ENCODE measurements at regions of chr15 and their contacts with region 1.

Region 1: DNA sequence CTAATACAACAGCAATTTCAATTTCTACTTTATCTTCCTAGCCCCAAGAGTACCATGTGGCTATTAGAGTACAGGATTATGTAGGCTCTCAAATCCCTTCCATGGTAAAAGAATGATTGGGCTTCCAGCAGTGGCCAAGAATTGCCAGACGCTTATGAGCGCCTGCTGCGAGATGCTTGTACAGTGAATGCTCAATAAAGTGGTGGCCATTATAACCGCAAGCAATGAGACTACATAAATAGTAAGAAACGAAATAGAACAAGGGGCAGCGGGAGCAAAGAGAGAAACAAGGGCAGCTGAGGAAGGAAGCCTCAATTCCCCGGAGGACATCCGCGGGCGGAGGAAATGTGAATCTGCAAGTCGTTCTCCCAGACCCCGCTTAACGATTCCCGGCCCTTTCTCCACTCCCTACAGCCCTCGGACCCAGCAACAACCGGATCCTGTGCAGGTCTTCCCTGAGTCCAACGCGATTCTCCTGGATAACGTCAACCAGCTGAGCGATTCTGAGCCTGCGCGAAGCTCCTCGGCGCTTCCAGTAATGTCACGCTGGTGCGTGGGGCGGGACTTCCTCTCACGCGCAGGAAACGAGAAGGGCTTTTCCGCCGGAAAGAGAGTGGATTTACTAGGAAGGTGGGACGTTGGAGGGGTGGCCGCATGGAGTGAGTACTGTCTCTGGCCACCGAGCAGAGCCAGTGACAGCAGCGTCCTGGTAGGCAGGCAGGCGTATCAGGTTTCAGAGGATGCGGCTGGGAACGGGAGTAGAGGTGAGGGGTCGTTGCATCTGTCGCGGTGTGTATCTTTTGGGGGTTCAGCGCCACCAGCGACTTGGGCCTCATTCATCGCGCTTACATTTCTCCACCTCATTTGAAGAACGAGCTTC is 40.5 kb upstream of the AP3B2 start:
- DNase-seq: peak; percentile 97

Region 2: GRCh38 chr15:82540055-82540983 is 209.9 kb before region 1 on chr15 and contains the start of gene RPS17:
- CTCF ChIA-PET with region 1: interaction called, 3 read pairs
- POLR2A ChIA-PET with region 1: interaction called, 38 read pairs
- DNase-seq: peak; percentile 100

Region 3: DNA sequence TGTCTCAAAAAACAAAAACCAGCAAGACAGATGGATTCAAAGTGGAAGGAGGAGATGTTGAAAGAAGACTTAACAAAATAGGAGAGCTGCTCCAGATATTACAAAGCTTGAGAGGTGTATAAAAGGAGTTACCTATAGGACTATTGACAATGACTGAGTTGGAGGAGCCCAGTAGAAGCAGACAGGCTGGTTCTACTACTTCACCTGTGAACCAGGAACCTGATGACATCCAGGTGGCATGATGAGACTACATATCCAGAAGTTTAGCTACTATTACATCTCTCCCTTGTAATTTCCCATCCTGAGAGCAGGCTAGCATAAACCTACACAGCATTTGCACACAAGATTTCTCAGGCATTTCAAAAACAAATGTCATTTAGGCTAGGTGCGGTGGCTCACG is 152.4 kb before region 1 on chr15:
- CTCF ChIA-PET with region 1: no interaction called
- POLR2A ChIA-PET with region 1: no interaction called
- DNase-seq: no peak

Region 4: DNA sequence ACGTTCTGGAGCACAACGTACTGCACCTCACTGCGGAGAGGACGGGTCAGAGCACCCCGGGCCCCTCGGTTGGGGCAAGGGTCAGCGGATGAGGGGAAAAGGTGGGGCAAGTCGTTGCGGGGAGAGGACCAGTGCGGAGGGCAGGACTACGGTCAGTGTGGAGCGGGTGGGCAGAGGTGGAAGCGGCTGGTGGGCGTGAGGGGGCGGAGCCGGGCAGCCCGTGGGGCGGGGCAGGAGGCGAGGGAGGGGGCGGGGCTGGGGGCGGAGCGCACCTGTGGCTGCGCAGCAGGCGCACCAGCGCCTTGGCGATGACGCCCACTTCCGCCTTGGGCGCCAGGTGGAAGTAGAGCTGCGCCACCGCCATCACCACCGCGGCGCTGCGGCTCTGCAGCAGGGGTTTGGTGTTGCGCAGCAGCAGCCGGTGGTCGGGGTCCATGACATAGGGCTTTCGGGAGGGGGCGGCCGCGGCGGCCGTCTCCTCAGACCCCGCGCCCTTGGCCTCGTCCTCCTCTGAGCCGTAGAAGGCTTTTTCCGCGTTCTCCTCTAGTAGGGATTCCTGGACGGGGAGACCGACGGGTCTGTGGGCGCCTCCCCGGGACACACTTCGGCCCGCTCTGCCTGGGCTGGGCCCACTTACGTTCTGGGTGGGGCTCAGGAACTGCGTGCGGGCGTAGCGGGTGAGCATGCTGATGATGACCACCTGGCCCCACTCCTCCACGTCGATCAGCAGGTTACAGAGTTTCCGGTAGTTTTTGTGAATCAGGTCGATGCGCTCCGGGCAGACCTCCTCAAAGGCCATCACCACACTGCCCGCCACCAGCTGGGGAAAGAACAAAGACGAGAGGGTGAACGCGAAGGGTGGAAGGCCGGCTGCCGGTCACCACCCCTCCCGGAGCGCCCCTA is 69.7 kb before region 1 on chr15:
- CTCF ChIA-PET with region 1: no interaction called
- POLR2A ChIA-PET with region 1: interaction called, 19 read pairs
- DNase-seq: peak; percentile 58

Region 5: DNA sequence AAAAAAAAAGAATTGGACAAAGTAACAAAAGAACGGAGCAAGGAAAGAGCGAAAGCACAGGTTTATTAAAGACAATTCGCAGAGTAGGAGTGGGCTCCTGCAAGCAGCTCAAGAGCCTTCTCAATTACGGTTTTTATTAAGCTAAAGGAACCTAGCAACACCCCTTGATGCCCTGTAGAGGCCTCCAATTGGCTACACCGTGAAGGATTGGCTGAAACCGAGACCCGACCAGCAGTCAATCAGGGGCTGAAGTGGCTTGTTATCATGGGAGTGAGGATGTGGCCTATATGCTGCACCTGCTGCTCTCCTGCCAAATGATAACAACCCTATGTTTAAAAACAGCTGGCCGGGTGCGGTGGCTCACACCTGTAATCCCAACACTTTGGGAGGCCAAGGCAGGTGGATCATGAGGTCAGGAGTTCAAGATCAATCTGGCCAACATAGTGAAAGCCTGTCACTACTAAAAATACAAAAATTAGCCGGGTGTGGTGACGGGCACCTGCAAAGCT is 20.1 kb before region 1 on chr15:
- CTCF ChIA-PET with region 1: no interaction called
- POLR2A ChIA-PET with region 1: interaction called, 12 read pairs
- DNase-seq: no peak

Region 6: DNA sequence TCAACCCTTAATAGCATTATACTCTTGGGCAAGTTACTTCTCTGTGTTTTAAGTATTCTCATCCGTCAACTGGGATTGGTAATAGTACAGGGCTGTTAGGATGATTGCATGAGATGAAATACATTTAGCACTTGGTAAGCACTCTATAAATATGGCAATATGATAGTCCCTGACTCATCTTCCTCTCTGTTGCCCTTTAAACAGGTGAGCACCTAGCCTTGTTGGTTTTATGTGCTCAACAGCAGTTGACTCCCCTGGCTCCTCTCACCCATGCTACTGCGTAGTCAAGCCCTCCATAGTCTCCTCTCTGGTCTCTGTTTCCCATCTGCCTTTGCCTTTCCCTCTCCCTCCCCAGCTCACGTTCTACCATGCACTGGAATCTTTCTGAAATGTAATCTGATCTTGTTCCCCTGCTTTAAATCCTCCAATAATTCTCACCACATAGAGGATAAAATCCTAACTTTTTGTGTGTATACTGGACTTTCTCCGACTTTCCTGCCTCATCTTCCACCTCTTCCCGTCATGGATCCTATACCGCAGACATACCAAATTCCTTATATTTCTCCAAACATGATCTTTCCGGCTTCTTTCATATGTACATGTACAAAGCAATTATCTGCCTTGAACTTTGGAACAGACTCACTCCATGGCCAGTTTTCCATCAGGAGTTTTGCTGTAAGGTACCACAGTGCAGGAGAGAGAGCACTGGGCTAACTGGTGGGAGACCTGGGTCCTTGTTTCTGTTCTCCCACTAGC is 13.3 kb after region 1 on chr15:
- CTCF ChIA-PET with region 1: no interaction called
- POLR2A ChIA-PET with region 1: interaction called, 58 read pairs
- DNase-seq: no peak

Region 7: GRCh38 chr15:82774496-82774895 is 24.3 kb after region 1 on chr15:
- CTCF ChIA-PET with region 1: no interaction called
- POLR2A ChIA-PET with region 1: interaction called, 22 read pairs
- DNase-seq: no peak

Region 8: GRCh38 chr15:82803793-82804574 is 53.8 kb after region 1 on chr15:
- CTCF ChIA-PET with region 1: interaction called, 3 read pairs
- POLR2A ChIA-PET with region 1: interaction called, 43 read pairs
- DNase-seq: no peak

Region 9: GRCh38 chr15:82894971-82895520 is 144.9 kb after region 1 on chr15:
- CTCF ChIA-PET with region 1: no interaction called
- POLR2A ChIA-PET with region 1: no interaction called
- DNase-seq: no peak

Region 10: DNA sequence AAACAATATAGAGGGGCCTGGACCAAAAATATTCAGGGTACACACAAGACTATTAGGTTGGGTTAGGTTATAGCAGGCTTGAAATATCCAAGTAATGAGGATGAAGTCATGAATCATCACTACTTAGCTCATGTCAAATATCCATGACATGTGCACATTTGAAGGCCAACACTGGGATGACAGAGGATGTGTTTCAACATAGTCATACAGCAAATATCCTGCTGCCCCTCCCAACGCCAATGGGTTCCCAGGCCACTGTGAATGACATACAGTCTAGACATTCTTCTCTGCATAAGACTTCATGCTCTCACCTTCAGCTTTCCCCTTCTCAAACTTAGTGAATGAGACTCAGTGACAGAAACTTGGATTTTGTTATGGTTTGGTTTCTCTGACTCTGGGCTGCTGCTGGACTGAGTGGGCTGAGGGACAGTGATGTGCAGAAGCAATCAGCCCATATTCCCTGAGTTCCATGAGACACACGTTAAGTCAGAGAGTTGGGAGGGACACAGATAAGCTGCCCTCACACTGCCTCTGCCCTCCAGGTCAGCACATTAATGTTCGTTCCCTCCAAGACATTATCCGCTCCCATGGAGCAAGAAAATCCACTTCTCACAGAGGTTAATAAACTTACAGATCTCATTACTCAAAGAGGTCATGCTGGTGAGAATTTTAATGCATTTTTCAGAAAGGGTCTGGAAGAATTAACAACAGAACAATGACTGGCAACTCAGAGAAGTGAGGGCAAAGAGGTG is 186.9 kb after region 1 on chr15:
- CTCF ChIA-PET with region 1: no interaction called
- POLR2A ChIA-PET with region 1: no interaction called
- DNase-seq: no peak

Region 11: DNA sequence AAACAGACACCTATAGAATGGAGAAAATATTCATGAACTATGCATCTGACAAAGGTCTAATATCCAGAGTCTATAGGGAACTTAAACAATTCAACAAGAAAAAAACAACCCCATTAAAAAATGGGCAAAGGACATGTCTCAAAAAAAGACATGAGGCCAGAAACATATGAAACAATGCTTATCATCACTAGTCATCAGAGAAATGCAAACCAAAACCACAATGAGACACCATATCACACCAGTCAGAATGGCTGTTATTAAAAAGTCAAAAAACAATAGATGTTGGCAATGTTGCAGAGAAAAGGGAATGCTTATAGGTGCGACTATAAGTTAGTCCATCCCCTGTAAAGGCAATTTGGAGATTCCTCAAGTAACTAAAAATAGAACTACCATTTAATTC is 468.8 kb after region 1 on chr15:
- CTCF ChIA-PET with region 1: no interaction called
- POLR2A ChIA-PET with region 1: no interaction called
- DNase-seq: no peak